T-cell (primary cell): ENCODE measurements at regions of chr14 and their contacts with region 1.

Region 1: GRCh38 chr14:80352471-80352870 is 141.2 kb upstream of the DIO2 start:
- DNase-seq: no peak
- ATAC-seq: no peak
- H3K4me3 ChIP-seq: no peak overlapping the region
- H3K4me3 Mint-ChIP-seq: no peak overlapping the region
- H3K27ac ChIP-seq: no peak overlapping the region
- H3K27ac Mint-ChIP-seq: no peak overlapping the region
- H3K4me1 ChIP-seq: no peaks in the 10 kb centered on the region
- H3K4me1 Mint-ChIP-seq: no peaks in the 10 kb centered on the region
- H3K27me3 ChIP-seq: no peaks in the 10 kb centered on the region
- H3K27me3 Mint-ChIP-seq: no peaks in the 10 kb centered on the region

Region 2: DNA sequence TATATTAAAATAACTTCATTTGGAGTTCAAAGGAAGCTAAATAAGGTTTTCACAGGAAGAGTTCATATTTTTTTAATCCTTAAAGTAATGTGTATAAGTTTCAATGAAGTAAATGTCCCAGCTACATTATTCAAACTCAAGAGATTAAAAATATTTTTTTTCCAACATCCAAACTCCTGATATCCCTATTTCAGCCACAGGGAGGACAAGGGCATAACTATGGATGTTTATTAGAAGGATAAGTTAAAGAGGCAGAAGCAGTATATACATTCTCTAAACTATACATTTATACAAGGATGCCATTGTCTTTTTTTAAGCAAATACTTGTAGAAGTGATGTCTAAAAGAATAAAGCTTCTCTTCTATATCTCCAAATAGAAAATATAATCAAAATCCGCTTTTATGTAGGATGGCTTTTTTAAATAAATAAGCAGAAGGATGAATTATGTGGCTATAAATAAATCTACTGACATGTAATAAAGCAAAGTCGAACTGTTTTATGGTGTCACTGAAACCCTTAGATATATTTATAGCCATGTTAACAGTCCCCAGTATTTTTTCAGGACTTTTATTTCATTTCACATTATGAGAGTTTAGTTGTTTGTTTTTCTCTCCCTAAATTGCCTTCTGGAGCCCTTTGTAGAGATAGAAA is 1077.7 kb before region 1 on chr14:
- CTCF ChIA-PET with region 1: no interaction called
- POLR2A ChIA-PET with region 1: interaction called in 1 of 2 experiments, 10 read pairs
- DNase-seq: no peak
- ATAC-seq: no peak
- H3K4me3 ChIP-seq: no peak overlapping the region
- H3K4me3 Mint-ChIP-seq: no peak overlapping the region
- H3K27ac ChIP-seq: no peak overlapping the region
- H3K27ac Mint-ChIP-seq: no peak overlapping the region
- H3K4me1 ChIP-seq: no peaks in the 10 kb centered on the region
- H3K4me1 Mint-ChIP-seq: peaks cover 0 to 3% (median 0%) of the 10 kb centered on the region in 3 donors
- H3K27me3 ChIP-seq: peaks cover 2 to 21% of the 10 kb centered on the region in 2 experiments
- H3K27me3 Mint-ChIP-seq: peaks cover 17 to 26% of the 10 kb centered on the region in 2 donors